Activated B cell treated with CpG ODN at 0.5 μM for 24 hours (primary cell): ENCODE measurements at regions of chr14 and their contacts with region 1.

Region 1: DNA sequence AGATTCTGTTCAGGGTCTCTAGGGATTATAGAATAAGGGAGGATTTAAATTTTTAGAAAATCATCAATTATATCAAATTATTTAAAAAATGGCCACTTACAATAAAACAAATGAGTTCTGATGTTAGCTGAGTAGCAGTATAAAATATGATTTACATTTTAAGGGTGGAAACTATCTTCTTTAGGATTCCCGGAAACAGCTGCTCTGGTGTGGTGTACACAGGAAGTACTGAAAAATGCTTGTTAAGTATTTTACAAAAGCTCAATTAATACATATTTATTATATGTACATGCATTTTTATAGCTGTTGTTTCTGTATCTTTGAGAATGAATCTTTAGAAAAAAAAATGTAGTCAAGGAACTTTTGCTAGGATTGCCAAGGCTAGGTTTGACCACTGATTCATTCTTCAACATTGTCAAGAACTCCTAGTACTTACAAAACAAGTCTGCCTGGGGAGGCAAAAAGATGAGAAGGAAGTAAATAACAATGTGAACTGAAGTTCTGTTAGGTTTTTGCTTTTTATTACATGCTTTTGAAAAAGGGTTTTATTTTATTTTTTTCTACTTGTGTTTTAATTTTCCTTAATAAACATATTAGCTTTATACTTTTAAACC is 48.0 kb downstream of the ARF6 start:
- DNase-seq: no peak
- ATAC-seq: peak; percentile 42
- H3K4me3 Mint-ChIP-seq: peak overlapping the region; percentile 7
- H3K27ac Mint-ChIP-seq: peak overlapping the region; percentile 61
- H3K4me1 Mint-ChIP-seq: peaks cover 42% of the 10 kb centered on the region
- H3K27me3 Mint-ChIP-seq: no peaks in the 10 kb centered on the region
- CTCF ChIP-seq: no peak

Region 2: GRCh38 chr14:49679274-49679673 is 261.6 kb before region 1 on chr14:
- CTCF ChIA-PET with region 1: no interaction called
- POLR2A ChIA-PET with region 1: no interaction called
- intact Hi-C with region 1: no loop called
- DNase-seq: no peak
- ATAC-seq: no peak
- H3K4me3 Mint-ChIP-seq: no peak overlapping the region
- H3K27ac Mint-ChIP-seq: no peak overlapping the region
- H3K4me1 Mint-ChIP-seq: no peaks in the 10 kb centered on the region
- H3K27me3 Mint-ChIP-seq: no peaks in the 10 kb centered on the region
- CTCF ChIP-seq: no peak

Region 3: DNA sequence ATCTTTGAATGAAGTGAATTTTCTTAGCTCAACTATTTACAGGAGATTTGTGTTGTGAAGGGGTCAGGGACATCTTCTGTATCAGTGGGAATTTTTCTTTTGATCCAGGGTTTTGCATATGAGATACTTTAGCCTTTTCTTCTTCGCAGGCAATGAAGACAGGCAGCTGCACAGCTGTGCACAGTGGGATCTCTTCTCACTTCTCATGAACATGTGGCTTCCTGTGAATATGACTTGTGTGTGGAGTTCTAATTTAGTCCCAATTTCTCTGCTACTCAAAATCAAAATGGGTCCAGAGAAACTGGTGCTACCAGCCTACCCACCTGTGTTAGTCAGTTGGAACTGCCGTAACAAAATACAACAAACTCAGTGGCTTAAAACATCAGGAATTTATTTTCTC is 10.2 kb before region 1 on chr14:
- CTCF ChIA-PET with region 1: no interaction called
- POLR2A ChIA-PET with region 1: interaction called, 5 read pairs
- intact Hi-C with region 1: loop called (anchors 1 kb)
- DNase-seq: no peak
- ATAC-seq: no peak
- H3K4me3 Mint-ChIP-seq: peak overlapping the region; percentile 40
- H3K27ac Mint-ChIP-seq: peak overlapping the region; percentile 88
- H3K4me1 Mint-ChIP-seq: peaks cover 34% of the 10 kb centered on the region
- H3K27me3 Mint-ChIP-seq: no peaks in the 10 kb centered on the region
- CTCF ChIP-seq: no peak

Region 4: DNA sequence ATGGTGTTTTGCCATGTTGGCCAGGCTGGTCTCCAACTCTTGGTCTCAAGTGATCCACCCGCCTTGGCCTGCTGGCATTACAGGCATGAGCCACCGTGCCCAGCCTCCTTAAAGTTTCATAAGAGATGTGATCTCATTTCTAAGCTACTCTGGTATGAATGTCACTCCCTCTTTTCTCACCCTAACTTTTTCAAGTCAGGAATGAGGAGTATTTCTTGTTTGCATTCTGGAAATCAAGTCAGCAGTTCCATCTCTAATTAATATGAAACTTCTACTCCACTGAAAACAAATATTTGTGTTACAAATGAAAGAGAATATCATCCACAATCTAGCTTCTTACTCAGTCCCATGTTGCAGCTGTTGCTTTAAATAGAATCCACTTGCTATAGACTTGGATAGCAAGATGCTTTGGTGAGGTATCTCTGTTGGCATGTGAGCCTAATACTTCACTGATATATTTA is 13.3 kb after region 1 on chr14:
- CTCF ChIA-PET with region 1: no interaction called
- POLR2A ChIA-PET with region 1: interaction called, 5 read pairs
- intact Hi-C with region 1: loop called (anchors 1 kb)
- DNase-seq: no peak
- ATAC-seq: no peak
- H3K4me3 Mint-ChIP-seq: no peak overlapping the region
- H3K27ac Mint-ChIP-seq: no peak overlapping the region
- H3K4me1 Mint-ChIP-seq: peaks cover 33% of the 10 kb centered on the region
- H3K27me3 Mint-ChIP-seq: no peaks in the 10 kb centered on the region
- CTCF ChIP-seq: no peak